ENCODE measurements at regions of chr1 and their contacts with region 1.

Region 1: GRCh38 chr1:186155594-186155993 is 219.5 kb downstream of the TPR start:
- DNase-seq: peak; percentile 44
- ATAC-seq: peak; percentile 80
- H3K4me3 ChIP-seq: no peak overlapping the region
- H3K27ac ChIP-seq: no peak overlapping the region
- H3K4me1 ChIP-seq: no peaks in the 10 kb centered on the region
- H3K27me3 ChIP-seq: no peaks in the 10 kb centered on the region
- CTCF ChIP-seq: peak; percentile 70
- EP300 ChIP-seq: no peak
- POLR2A ChIP-seq: no peak
- RAD21 ChIP-seq: peak; percentile 59; the same call in 1 of the 2 replicates

Region 2: DNA sequence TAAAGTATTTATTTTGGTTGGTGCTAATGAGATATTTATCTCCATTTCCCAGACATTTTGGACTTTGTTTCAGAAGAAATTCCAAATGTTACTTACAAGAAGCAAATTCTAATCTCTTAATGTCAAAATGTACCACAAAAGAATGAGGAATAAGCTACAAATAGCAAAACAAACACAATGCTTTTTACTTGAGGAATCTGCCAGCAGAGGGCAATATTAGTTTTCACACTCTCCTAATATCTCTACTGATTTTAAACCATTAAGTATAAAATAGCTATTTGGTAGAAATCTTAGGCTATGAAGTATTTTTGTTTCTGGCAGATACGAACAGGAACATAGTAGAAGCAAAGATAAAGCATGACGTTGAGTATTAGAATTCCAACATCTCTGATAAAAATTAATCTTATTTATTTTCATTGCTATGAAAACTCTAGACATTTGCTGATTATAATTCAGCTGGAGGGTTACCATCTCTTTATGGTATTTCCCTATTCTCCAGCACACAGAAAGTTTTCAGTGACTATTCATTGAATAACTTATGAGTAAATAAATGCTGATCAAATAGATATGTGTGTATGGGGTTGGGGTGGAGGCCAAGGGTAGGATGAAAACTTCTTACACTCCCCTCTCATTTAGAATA is 434.8 kb before region 1 on chr1:
- CTCF ChIA-PET with region 1: no interaction called
- POLR2A ChIA-PET with region 1: no interaction called
- in situ Hi-C with region 1: no loop called
- intact Hi-C with region 1: loop called (anchors 5 kb)
- DNase-seq: peak; percentile 17
- ATAC-seq: 0 out of 3 replicates have a peak, but pooled peaks have one; percentile 30
- H3K4me3 ChIP-seq: no peak overlapping the region
- H3K27ac ChIP-seq: no peak overlapping the region
- H3K4me1 ChIP-seq: no peaks in the 10 kb centered on the region
- H3K27me3 ChIP-seq: no peaks in the 10 kb centered on the region
- CTCF ChIP-seq: peak; percentile 34; the same call in 1 of the 2 replicates
- EP300 ChIP-seq: no peak
- POLR2A ChIP-seq: no peak
- RAD21 ChIP-seq: no peak

Region 3: DNA sequence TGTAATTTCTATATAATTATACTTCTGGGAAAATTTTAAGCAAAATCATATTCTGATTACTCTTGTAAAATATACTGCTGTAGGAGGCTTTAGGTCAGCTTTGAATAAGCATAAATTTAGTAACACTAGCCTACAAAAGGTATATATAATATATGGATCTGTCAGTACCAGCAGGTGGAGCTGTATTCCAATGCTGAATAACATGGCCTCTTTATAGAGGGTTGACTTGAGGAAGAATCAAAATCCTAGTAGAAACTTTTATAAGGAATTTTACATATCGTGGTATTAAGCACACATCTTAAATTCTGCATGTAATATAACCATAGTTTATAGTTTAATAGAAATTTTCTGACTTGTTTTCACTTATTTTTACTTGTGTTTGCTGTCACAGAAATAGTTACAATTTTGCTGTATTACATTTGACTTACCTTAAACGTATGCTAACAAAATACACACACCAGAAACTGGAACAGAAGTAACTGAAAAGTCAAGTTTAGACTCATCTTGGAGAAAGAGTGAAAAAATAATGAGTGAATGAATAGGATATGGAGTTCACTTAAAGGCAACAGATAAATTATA is 342.1 kb before region 1 on chr1:
- CTCF ChIA-PET with region 1: no interaction called
- POLR2A ChIA-PET with region 1: no interaction called
- in situ Hi-C with region 1: no loop called
- intact Hi-C with region 1: loop called (anchors 5 kb)
- DNase-seq: peak; percentile 24
- ATAC-seq: peak; percentile 71
- H3K4me3 ChIP-seq: no peak overlapping the region
- H3K27ac ChIP-seq: no peak overlapping the region
- H3K4me1 ChIP-seq: no peaks in the 10 kb centered on the region
- H3K27me3 ChIP-seq: no peaks in the 10 kb centered on the region
- CTCF ChIP-seq: peak; percentile 48
- EP300 ChIP-seq: no peak
- POLR2A ChIP-seq: no peak
- RAD21 ChIP-seq: no peak

Region 4: DNA sequence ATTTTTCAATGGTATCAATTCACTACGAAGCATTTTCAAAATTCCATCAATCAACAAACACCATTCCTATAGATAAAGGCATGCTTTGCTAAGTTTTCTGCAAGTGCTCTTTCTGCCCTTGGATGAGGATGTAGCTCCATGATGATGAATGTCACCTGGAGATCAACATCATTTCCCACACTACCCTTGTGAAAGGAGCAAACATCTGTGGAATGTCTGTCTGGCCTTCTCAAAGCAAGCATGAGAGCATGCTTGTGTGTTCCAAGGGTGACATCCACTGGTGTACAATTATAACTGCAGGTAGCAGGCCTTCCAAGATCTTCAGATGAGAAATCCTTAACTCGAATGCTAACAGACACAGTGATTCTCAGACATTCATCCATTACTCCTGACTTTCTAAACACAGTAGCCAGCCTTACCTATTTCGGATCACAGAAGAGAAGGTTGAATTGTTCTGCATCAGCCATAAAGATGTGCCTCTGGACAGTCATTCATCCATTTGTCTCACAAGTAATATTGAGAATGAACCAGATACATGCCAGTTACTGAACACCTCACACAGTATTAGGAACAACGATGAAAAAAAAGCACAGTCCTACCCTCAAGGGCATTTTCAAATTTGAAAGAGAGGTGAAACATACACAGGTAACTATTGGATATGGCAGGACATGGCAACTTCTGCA is 57.1 kb after region 1 on chr1:
- CTCF ChIA-PET with region 1: interaction called, 14 read pairs
- POLR2A ChIA-PET with region 1: no interaction called
- in situ Hi-C with region 1: no loop called
- intact Hi-C with region 1: loop called (anchors 1 kb)
- DNase-seq: peak; percentile 74
- ATAC-seq: peak; percentile 95
- H3K4me3 ChIP-seq: no peak overlapping the region
- H3K27ac ChIP-seq: no peak overlapping the region
- H3K4me1 ChIP-seq: no peaks in the 10 kb centered on the region
- H3K27me3 ChIP-seq: no peaks in the 10 kb centered on the region
- CTCF ChIP-seq: peak; percentile 92
- EP300 ChIP-seq: no peak
- POLR2A ChIP-seq: no peak
- RAD21 ChIP-seq: peak; percentile 86

Region 5: DNA sequence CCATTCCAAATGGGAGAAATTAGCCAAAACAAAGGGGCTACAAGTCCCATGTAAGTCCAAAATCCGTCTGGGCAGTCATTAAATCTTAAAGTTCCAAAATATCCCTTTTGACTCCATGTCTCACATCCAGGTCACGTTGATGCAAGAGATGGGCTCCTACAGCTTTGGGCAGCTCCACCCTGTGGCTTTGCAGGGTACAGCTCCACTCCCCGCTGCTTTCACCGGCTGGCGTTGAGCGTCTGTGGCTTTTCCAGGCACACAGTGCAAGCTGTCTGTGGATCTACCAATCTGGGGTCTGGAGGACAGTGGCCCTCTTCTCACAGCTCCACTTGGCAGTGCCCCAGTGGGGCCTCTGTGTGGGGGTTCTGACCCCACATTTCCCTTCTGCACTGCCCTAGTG is 89.2 kb after region 1 on chr1:
- CTCF ChIA-PET with region 1: no interaction called
- POLR2A ChIA-PET with region 1: no interaction called
- in situ Hi-C with region 1: no loop called
- intact Hi-C with region 1: loop called (anchors 1 kb)
- DNase-seq: peak; percentile 5
- ATAC-seq: peak; percentile 97
- H3K4me3 ChIP-seq: no peak overlapping the region
- H3K27ac ChIP-seq: no peak overlapping the region
- H3K4me1 ChIP-seq: no peaks in the 10 kb centered on the region
- H3K27me3 ChIP-seq: no peaks in the 10 kb centered on the region
- CTCF ChIP-seq: peak; percentile 66
- EP300 ChIP-seq: no peak
- POLR2A ChIP-seq: no peak
- RAD21 ChIP-seq: no peak